Activated CD4-positive, alpha-beta T cell treated with anti-CD3 and anti-CD28 coated beads, Interleukin-2, amount 10 ng/mL, durations not matched to agents 24 days and 14 days (primary cell): ENCODE measurements at regions of chr4 and their contacts with region 1.

Region 1: GRCh38 chr4:71184195-71184781 is 154.5 kb upstream of the SLC4A4 start:
- DNase-seq: peak; percentile 78
- H3K4me3 Mint-ChIP-seq: no peak overlapping the region
- H3K27ac Mint-ChIP-seq: no peak overlapping the region
- H3K4me1 Mint-ChIP-seq: peaks cover 18% of the 10 kb centered on the region
- H3K27me3 Mint-ChIP-seq: peaks cover 41% of the 10 kb centered on the region

Region 2: GRCh38 chr4:70651864-70652506 is 532.3 kb before region 1 on chr4:
- intact Hi-C with region 1: loop called (anchors 10 kb)
- DNase-seq: peak; percentile 62
- H3K4me3 Mint-ChIP-seq: no peak overlapping the region
- H3K27ac Mint-ChIP-seq: no peak overlapping the region
- H3K4me1 Mint-ChIP-seq: peaks cover 3% of the 10 kb centered on the region
- H3K27me3 Mint-ChIP-seq: peaks cover 9% of the 10 kb centered on the region

Region 3: DNA sequence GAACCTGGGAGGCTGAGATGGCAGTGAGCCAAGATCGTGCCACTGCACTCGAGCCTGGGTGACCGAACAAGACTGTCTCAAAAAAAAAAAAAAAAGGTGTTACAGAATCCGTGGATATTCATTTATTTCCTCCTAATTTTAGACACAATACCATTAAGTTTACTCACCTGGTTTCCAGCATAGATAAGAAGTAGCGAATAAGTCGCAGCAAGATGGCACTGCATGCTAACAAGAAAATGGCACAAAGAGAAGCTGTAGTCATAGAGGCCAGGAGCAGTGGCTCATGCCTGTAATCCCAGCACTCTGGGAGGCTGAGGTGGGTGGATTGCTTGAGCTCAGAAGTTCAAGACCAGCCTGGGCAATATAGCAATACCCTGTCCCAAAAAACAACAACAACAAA is 299.1 kb before region 1 on chr4:
- intact Hi-C with region 1: loop called (anchors 10 kb)
- DNase-seq: no peak
- H3K4me3 Mint-ChIP-seq: no peak overlapping the region
- H3K27ac Mint-ChIP-seq: no peak overlapping the region
- H3K4me1 Mint-ChIP-seq: no peaks in the 10 kb centered on the region
- H3K27me3 Mint-ChIP-seq: peaks cover 10% of the 10 kb centered on the region

Region 4: GRCh38 chr4:70927502-70928137 is 256.7 kb before region 1 on chr4:
- intact Hi-C with region 1: no loop called
- DNase-seq: peak; percentile 77
- H3K4me3 Mint-ChIP-seq: peak overlapping the region; percentile 25
- H3K27ac Mint-ChIP-seq: peak overlapping the region; percentile 30
- H3K4me1 Mint-ChIP-seq: peaks cover 36% of the 10 kb centered on the region
- H3K27me3 Mint-ChIP-seq: no peaks in the 10 kb centered on the region

Region 5: GRCh38 chr4:71141125-71141524 is 43.2 kb before region 1 on chr4:
- intact Hi-C with region 1: no loop called
- DNase-seq: no peak
- H3K4me3 Mint-ChIP-seq: no peak overlapping the region
- H3K27ac Mint-ChIP-seq: no peak overlapping the region
- H3K4me1 Mint-ChIP-seq: no peaks in the 10 kb centered on the region
- H3K27me3 Mint-ChIP-seq: no peaks in the 10 kb centered on the region

Region 6: GRCh38 chr4:71307729-71308128 is 123.4 kb after region 1 on chr4:
- intact Hi-C with region 1: no loop called
- DNase-seq: no peak
- H3K4me3 Mint-ChIP-seq: no peak overlapping the region
- H3K27ac Mint-ChIP-seq: no peak overlapping the region
- H3K4me1 Mint-ChIP-seq: peaks cover 2% of the 10 kb centered on the region
- H3K27me3 Mint-ChIP-seq: no peaks in the 10 kb centered on the region

Region 7: DNA sequence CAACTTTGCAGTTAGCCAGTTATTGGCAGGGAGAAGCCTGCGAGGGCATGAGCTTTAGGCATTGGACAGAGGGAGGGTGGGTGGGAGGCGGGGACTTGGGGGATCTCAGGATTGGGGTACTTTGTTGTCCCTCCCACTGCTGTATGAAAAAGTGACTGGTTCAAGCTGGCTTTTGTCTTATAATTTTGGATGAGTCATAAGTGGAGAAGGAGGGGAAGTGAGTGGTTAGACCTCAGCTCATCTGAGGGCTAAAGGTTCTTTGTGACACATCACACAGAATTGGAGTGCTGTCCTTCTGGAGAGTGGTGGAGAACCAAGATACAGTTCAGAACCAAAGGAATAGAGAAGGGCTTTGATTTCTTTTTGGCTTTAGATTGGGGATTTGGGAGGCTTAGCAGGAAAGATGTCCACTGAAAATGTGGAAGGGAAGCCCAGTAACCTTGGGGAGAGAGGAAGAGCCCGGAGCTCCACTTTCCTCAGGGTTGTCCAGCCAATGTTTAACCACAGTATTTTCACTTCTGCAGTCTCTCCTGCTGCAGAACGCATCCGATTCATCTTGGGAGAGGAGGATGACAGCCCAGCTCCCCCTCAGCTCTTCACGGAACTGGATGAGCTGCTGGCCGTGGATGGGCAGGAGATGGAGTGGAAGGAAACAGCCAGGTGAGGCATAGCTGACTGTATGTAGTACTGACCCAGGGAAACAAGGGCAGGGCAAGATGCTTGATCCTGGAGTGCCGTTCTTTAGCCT is 154.7 kb after region 1 on chr4 and contains the start of gene SLC4A4:
- intact Hi-C with region 1: no loop called
- DNase-seq: peak; percentile 60
- H3K4me3 Mint-ChIP-seq: no peak within 1 kb of the TSS
- H3K27ac Mint-ChIP-seq: no peak within 1 kb of the TSS
- H3K4me1 Mint-ChIP-seq: peaks cover 3% of the 10 kb centered on the region
- H3K27me3 Mint-ChIP-seq: peaks cover 4% of the 10 kb centered on the region
- total RNA-seq, gene SLC4A4: 0.09 and 0.21 TPM in 2 replicates

Region 8: GRCh38 chr4:71713611-71714203 is 529.4 kb after region 1 on chr4:
- intact Hi-C with region 1: loop called (anchors 2 kb)
- DNase-seq: no peak
- H3K4me3 Mint-ChIP-seq: no peak overlapping the region
- H3K27ac Mint-ChIP-seq: no peak overlapping the region
- H3K4me1 Mint-ChIP-seq: no peaks in the 10 kb centered on the region
- H3K27me3 Mint-ChIP-seq: no peaks in the 10 kb centered on the region

Region 9: DNA sequence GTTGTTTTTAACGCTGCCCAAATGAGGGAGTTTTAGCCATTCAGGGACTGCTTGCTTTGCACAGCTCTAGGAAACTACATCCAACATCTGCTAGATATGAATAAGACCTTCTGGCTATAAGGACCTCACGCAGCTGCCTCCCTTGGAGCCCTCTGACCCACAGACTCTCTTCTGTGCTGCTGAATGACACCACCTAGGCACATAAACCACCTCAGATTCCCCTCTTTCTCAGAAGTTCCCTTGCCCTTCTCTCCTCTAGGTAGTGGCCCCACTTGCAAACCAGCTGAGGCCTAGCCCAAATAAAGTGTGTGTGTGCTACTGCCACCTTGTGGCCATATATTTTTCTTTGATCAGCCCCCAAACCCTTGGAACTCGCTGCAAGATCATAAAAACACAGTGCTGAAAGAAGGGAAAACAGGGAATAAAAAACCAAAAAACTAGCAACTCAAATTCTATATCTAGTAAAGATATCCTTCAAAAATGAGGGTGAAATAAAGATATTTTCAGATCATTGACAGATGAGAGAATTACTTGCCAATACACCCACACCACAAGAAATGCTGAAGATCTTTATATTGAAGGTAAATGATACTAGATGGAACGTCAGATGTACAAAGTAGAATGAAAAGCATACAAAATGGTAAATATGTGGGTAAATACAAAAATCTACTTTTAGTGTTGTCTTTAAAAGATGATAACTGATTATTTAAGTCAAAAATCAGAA is 1118.9 kb after region 1 on chr4:
- intact Hi-C with region 1: loop called (anchors 10 kb)
- DNase-seq: peak; percentile 79
- H3K4me3 Mint-ChIP-seq: no peak overlapping the region
- H3K27ac Mint-ChIP-seq: no peak overlapping the region
- H3K4me1 Mint-ChIP-seq: no peaks in the 10 kb centered on the region
- H3K27me3 Mint-ChIP-seq: no peaks in the 10 kb centered on the region